Posterior vena cava (tissue), 2 donors: ENCODE measurements at regions of chr17 and their contacts with region 1.

Region 1: DNA sequence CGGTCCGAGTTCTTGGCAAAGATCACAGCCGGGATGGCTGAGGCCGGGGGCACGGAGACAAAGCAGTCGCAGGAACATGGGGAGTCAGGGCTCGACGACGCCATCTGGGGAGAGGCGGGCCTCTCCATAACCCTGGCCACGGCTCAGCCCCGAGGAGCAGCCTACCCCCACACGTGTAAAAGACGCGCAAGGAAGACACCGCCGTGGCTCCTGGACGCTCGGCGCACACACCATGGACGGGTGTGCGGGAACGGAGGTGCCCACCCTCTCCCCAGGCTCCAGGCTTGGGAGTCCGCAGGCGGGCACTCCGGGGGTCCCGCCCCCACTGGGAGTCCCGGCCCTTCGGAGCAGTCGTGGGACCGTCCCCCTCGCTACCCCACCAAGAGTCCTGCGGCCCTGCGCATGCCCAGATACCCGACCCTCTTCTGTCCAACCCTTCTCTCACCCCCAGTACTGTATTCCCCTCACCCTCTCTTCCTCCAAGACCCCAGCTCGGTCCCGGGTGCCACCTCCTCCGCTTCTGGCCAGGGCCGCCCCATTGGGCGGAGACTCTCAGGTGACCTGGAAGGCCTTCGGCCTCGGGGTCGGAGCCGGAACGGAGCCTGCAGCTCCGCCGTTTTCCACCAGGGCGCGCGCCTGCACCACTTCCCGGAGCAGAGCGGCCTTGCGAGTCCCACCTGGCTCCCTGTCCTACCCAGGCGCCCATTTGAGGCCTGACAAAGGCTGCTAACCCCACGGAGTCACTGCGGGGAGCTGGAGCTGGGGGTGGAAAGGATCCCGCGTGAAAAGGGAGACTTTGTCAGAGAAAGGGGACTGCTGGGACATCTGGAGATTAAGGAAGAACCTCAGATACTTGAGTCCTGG is at the start of gene SCRN2:
- DNase-seq: peak; percentile 97
- total RNA-seq, gene SCRN2: 13.3 to 17.8 TPM

Region 2: GRCh38 chr17:47889734-47890529 is 49.0 kb after region 1 on chr17:
- intact Hi-C with region 1: loop called (anchors 2 kb)
- DNase-seq: peak; percentile 95

Region 3: DNA sequence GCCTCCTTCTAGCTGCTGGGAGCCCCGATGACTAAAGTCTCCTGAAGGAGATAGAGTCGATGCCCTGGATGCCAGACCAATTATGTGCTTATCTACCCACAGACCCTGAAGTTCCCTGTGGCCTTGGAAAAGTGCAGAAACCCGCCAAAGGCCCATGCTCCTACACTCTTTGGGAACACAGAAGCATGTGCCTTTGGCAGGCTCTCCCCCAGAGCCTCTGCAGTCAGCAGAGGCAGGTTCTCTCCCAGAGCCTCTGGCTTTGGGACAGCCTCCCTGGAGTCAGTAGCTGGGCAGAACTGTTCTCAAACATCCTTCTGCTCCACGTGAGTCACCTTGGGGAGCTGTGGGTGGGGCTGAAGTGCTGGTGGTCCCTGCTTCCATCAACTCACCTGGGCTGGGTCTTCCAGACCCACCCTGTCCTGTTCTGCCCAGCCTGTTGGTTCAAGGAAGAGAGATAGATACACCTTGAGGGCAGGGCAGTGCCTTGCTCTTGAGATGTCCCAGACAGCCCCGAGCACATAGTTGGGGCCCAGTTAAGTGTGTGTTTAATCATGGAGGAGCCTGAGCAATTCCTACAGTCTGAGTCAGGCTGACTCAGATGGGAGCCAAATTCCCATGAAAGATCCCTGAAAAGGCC is 126.8 kb after region 1 on chr17:
- intact Hi-C with region 1: loop called in 1 of 2 experiments (anchors 10 kb)
- DNase-seq: no peak